Activated CD4-positive, alpha-beta memory T cell treated with anti-CD3 and anti-CD28 coated beads, Interleukin-2, amount 10 ng/mL, durations not matched to agents 7 days and 5 days (primary cell): ENCODE measurements at regions of chr12 and their contacts with region 1.

Region 1: GRCh38 chr12:79935021-79935623 is at the start of gene PPP1R12A:
- DNase-seq: peak; percentile 95
- H3K4me3 Mint-ChIP-seq: peak within 1 kb of the TSS; percentile 87
- H3K27ac Mint-ChIP-seq: peak within 1 kb of the TSS; percentile 90
- H3K4me1 Mint-ChIP-seq: peaks cover 39% of the 10 kb centered on the region
- H3K27me3 Mint-ChIP-seq: no peaks in the 10 kb centered on the region
- total RNA-seq, gene PPP1R12A: 114 to 115 TPM

Region 2: DNA sequence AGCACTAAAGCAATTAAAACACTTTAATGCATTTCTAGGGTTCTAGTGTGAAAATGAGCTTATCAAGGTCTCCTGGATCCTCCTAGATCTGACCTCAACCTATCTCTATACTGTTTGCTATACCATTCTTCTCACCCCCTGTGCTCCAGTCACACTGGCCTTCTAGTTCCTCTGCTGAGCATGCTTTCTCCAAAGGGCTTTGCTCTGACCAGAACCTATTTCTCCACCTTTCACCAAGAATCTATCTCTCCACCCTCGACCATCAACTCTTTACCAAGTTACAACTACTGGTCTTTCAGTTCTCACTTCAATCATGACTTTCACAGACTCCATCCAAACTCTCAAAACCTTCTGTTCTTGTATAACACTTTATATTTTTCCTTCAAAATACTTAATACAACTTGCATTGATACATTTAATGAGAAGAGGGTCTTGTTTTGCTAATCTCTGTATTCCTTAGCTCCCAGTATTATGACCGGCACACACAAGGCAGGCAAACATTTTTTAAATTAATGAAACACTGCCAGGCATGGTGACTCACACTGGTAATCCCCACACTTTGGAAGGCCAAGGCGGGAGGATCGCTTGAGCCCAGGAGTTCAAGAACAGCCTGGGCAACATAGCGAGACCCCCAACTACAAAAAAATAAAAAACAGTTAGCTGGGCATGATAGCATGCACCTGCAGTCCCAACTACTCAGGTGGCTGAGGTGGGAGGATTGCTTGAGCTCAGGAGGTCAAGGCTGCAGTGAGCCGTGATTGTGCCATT is 23.0 kb before region 1 on chr12:
- CTCF ChIA-PET with region 1: no interaction called
- POLR2A ChIA-PET with region 1: interaction called, 10 read pairs
- DNase-seq: no peak
- H3K4me3 Mint-ChIP-seq: no peak overlapping the region
- H3K27ac Mint-ChIP-seq: no peak overlapping the region
- H3K4me1 Mint-ChIP-seq: peaks cover 30% of the 10 kb centered on the region
- H3K27me3 Mint-ChIP-seq: no peaks in the 10 kb centered on the region